Mammary epithelial cell (primary cell): ENCODE measurements at regions of chr4 and their contacts with region 1.

Region 1: GRCh38 chr4:52983563-52984303 is 121.6 kb downstream of the RASL11B start:
- DNase-seq: peak; percentile 42
- H3K4me3 ChIP-seq: no peak overlapping the region
- H3K27ac ChIP-seq: no peak overlapping the region
- H3K4me1 ChIP-seq: peaks cover 10% of the 10 kb centered on the region
- H3K27me3 ChIP-seq: no peaks in the 10 kb centered on the region
- CTCF ChIP-seq: peak; percentile 58 to 64

Region 2: GRCh38 chr4:52234561-52235440 is 748.9 kb before region 1 on chr4:
- CTCF ChIA-PET with region 1: no interaction called
- dilution Hi-C with region 1: no loop called
- in situ Hi-C with region 1: loop called (anchors 10 kb)
- intact Hi-C with region 1: loop called (anchors 1 kb)
- DNase-seq: peak; percentile 41
- H3K4me3 ChIP-seq: no peak overlapping the region
- H3K27ac ChIP-seq: no peak overlapping the region
- H3K4me1 ChIP-seq: no peaks in the 10 kb centered on the region
- H3K27me3 ChIP-seq: peaks cover 5% of the 10 kb centered on the region
- CTCF ChIP-seq: peak; percentile 58 to 68

Region 3: DNA sequence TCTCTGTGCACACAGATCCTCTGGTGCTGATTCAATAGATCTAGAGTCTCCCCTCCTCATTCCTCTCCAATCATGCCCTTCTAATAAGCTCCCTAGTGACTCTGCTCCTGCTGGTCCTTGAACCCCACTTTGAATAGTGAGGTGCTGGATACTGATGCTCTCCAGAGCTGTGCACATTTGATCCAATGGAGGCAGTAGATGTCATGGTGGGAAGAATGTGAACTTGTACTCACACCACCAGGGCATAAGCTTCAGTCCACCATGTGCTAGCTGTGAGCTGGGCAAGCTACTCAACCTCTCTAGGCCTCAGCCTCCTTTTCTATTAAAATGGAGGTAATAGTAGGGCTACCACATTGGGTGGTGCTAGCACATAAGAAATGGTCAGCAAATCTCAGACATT is 691.5 kb before region 1 on chr4:
- CTCF ChIA-PET with region 1: no interaction called
- dilution Hi-C with region 1: no loop called
- in situ Hi-C with region 1: no loop called
- intact Hi-C with region 1: loop called (anchors 1 kb)
- DNase-seq: no peak
- H3K4me3 ChIP-seq: no peak overlapping the region
- H3K27ac ChIP-seq: no peak overlapping the region
- H3K4me1 ChIP-seq: no peaks in the 10 kb centered on the region
- H3K27me3 ChIP-seq: no peaks in the 10 kb centered on the region
- CTCF ChIP-seq: no peak

Region 4: DNA sequence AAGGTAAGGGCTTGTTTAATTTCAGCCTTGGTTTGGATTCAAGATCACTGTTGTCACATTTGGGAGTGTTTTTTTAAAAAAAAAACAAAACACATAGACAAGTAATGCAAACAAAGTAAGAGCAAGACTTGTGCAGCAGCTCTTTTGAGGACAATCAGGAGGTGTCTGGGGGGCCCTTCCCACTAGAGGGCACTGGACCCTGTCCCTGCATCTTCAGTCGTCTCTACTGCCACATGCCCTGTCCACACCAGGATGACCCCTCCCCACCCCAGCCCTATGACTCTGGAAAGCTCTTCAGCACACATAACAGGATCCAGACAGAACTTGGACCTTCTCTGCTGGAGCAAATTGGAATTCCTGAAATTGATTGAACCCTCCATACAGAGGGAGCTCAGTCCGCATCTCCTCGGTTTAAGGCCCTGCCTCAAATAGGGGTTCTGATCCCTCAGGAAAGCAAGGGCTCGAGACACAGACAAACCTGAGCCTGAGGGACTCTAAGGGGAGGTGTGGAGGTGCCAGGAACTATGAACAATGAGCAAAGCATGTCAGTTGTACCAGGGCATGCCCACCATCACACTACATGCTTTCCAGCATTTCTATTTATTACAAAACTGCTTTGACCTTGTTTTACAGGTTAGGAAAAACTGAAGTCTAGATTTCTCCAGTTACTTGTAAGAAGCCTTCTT is 395.5 kb before region 1 on chr4:
- CTCF ChIA-PET with region 1: no interaction called
- dilution Hi-C with region 1: no loop called
- in situ Hi-C with region 1: no loop called
- intact Hi-C with region 1: loop called (anchors 1 kb)
- DNase-seq: no peak
- H3K4me3 ChIP-seq: no peak overlapping the region
- H3K27ac ChIP-seq: peak overlapping the region; percentile 25
- H3K4me1 ChIP-seq: peaks cover 19% of the 10 kb centered on the region
- H3K27me3 ChIP-seq: no peaks in the 10 kb centered on the region
- CTCF ChIP-seq: peak; percentile 39 to 45

Region 5: GRCh38 chr4:52750819-52751486 is 232.8 kb before region 1 on chr4 and contains the start of gene ERVMER34-1:
- CTCF ChIA-PET with region 1: no interaction called
- dilution Hi-C with region 1: no loop called
- in situ Hi-C with region 1: no loop called
- intact Hi-C with region 1: loop called (anchors 10 kb)
- DNase-seq: peak; percentile 54
- H3K4me3 ChIP-seq: peak within 1 kb of the TSS; percentile 51 to 62 (median 60)
- H3K27ac ChIP-seq: peak within 1 kb of the TSS; percentile 38
- H3K4me1 ChIP-seq: peaks cover 11% of the 10 kb centered on the region
- H3K27me3 ChIP-seq: no peaks in the 10 kb centered on the region
- CTCF ChIP-seq: no peak
- total RNA-seq, gene ERVMER34-1: 5.7 to 6.6 TPM

Region 6: GRCh38 chr4:52911684-52912294 is 71.9 kb before region 1 on chr4:
- CTCF ChIA-PET with region 1: no interaction called
- dilution Hi-C with region 1: no loop called
- in situ Hi-C with region 1: no loop called
- intact Hi-C with region 1: loop called (anchors 5 kb)
- DNase-seq: peak; percentile 73
- H3K4me3 ChIP-seq: no peak overlapping the region
- H3K27ac ChIP-seq: no peak overlapping the region
- H3K4me1 ChIP-seq: peaks cover 3% of the 10 kb centered on the region
- H3K27me3 ChIP-seq: no peaks in the 10 kb centered on the region
- CTCF ChIP-seq: peak; percentile 94 to 95